CD14-positive monocyte (primary cell): ENCODE measurements at regions of chr9 and their contacts with region 1.

Region 1: GRCh38 chr9:133992780-133993634 is 883 bp upstream of the VAV2 start:
- DNase-seq: peak; percentile 51 to 54 (median 51)
- H3K4me3 ChIP-seq: peak overlapping the region; percentile 62 to 91 (median 64)
- H3K4me3 Mint-ChIP-seq: peak overlapping the region; percentile 74 to 84
- H3K27ac ChIP-seq: peak overlapping the region; percentile 7 to 79
- H3K27ac Mint-ChIP-seq: peak overlapping the region in 3 of 7 donors; percentile 22 to 64 (median 30)
- H3K4me1 ChIP-seq: peaks cover 26 to 39% of the 10 kb centered on the region in 2 donors
- H3K4me1 Mint-ChIP-seq: peaks cover 33% of the 10 kb centered on the region
- H3K27me3 ChIP-seq: peaks cover 0 to 15% of the 10 kb centered on the region in 2 donors
- H3K27me3 Mint-ChIP-seq: peaks cover 22 to 29% (median 23%) of the 10 kb centered on the region in 3 donors
- CTCF ChIP-seq: peak; percentile 57

Region 2: DNA sequence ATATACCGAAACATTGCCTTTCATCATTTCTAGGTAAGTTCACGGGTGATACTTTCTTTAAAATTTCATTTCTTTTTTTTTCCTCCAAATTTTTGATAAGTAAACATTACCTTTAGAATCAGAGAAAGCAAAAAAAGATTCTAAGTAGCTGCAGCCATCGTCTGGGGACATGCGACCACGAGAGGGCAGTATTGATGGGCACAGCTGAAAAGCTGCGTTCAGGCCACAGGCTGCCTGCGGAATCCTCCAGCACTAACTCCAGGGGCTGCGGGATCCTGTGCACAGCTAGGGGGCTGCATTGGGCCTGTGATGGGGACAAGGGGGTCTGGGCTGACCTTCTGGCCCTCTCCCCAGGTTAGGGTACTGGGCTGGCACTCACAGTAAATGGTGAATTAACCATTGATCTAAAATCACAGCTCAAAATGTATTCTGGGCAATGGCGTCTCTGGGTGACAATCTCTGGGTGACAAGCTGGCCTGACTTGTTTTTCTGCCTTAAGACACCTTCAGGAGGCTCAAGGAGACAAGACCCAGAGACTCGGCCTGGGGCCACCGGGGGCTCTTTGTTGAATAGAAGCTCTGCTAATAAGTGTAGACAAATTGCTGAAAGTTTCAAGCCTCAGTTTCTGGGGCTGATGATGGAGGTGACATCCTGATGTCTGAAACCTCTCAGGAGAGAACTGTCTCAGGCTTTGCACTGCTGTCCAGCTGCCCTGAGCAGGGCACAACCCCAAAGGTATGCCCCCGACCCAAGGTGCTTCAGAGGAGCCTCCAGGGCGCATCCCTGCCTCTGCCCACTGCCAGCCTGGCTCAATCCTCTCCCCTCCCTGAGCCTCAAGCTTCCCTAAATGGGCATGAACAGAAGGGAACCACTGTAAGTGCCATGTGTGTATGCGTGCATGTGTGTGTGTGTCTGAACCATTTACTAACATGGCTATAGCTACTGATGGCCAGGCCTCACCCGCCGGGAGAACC is 210.6 kb before region 1 on chr9:
- intact Hi-C with region 1: loop called (anchors 1 to 2 kb)
- DNase-seq: peak; percentile 61 to 63 (median 63)
- H3K4me3 ChIP-seq: no peak overlapping the region
- H3K4me3 Mint-ChIP-seq: no peak overlapping the region
- H3K27ac ChIP-seq: no peak overlapping the region
- H3K27ac Mint-ChIP-seq: peak overlapping the region in 2 of 7 donors; percentile 15 to 24
- H3K4me1 ChIP-seq: peaks cover 29 to 39% of the 10 kb centered on the region in 2 donors
- H3K4me1 Mint-ChIP-seq: peaks cover 40% of the 10 kb centered on the region
- H3K27me3 ChIP-seq: no peaks in the 10 kb centered on the region
- H3K27me3 Mint-ChIP-seq: peaks cover 0 to 2% (median 2%) of the 10 kb centered on the region in 3 donors
- CTCF ChIP-seq: peak; percentile 79

Region 3: DNA sequence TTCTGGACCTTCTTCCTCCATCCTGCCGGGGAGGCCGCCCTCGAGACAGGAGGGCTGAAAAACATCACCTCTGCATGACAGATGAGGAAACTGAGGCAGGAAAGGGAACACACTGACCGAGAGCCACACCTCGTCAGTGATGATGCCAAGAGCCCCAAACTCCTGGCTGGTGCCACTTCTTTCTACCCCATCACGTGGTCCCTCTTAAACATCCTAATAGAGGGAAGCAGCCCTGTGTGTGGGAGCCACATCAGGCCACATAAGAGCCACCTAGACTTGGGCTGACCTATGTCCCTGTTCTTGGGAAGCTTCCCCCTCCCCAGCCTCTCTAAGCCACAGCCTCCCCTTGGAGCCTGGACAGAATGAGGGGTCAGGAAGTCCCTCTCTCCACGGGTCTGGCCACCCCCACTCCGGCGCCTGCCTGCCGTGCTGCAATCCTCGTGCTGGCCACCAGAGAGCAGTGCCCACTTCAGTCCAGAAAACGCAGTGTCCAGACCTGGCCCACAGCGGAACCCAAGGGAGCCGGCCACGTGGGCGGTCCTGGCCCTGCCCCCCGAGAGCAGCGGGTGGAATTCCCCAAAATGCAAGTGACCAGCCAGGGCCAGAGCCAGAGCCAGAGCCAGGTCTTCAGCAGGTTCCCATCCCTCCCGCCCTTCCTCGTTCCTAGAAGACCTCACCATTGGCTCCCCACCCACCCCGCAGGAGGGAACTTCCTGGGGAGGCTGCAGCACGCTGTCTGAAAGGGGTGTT is 200.1 kb before region 1 on chr9:
- intact Hi-C with region 1: loop called (anchors 1 kb)
- DNase-seq: peak; percentile 83 to 95 (median 87)
- H3K4me3 ChIP-seq: peak overlapping the region in 2 of 3 experiments; percentile 14 to 52
- H3K4me3 Mint-ChIP-seq: peak overlapping the region; percentile 58 to 75
- H3K27ac ChIP-seq: peak overlapping the region; percentile 1 to 53
- H3K27ac Mint-ChIP-seq: peak overlapping the region; percentile 30 to 90 (median 65)
- H3K4me1 ChIP-seq: peaks cover 31 to 42% of the 10 kb centered on the region in 2 donors
- H3K4me1 Mint-ChIP-seq: peaks cover 44% of the 10 kb centered on the region
- H3K27me3 ChIP-seq: no peaks in the 10 kb centered on the region
- H3K27me3 Mint-ChIP-seq: peaks cover 1 to 13% (median 5%) of the 10 kb centered on the region in 3 donors
- CTCF ChIP-seq: peak; percentile 95

Region 4: DNA sequence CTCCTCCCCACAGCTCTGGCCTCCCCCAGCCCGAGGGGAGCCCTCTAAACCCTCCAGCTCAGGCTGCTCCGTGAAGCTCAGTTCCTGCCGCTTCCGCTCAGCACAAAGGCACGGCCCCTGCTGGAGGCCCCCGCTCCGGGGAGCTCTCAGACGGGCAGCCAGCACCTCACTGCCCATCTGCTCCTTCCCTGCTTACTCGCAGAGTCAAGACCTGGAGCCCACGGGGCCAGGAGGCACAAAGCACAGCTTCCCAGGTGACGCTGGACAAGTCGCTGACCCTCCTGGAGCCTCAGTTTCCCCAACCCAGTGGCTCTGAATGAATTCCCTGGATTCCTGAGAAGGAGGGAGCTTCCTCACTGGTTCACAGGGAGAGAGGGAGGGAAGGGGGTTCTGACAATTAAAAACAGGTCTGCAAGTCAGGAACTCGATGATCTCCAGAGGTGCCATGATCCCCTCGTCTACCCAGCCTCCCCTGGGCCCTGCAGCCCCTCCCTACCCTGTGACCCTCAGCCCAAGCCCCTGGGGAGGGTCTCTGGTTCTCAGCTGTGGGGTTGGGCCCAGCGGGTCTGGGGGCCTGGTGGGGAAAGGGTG is 37.1 kb before region 1 on chr9:
- intact Hi-C with region 1: loop called in 1 of 2 experiments (anchors 5 kb)
- DNase-seq: peak; percentile 7 to 28 (median 12)
- H3K4me3 ChIP-seq: peak overlapping the region in 2 of 3 experiments; percentile 7 to 60
- H3K4me3 Mint-ChIP-seq: peak overlapping the region; percentile 69 to 89
- H3K27ac ChIP-seq: no peak overlapping the region
- H3K27ac Mint-ChIP-seq: peak overlapping the region in 1 of 7 donors; percentile 36
- H3K4me1 ChIP-seq: peaks cover 40 to 45% of the 10 kb centered on the region in 2 donors
- H3K4me1 Mint-ChIP-seq: peaks cover 50% of the 10 kb centered on the region
- H3K27me3 ChIP-seq: peaks cover 0 to 2% of the 10 kb centered on the region in 2 donors
- H3K27me3 Mint-ChIP-seq: peaks cover 6 to 11% (median 11%) of the 10 kb centered on the region in 3 donors
- CTCF ChIP-seq: no peak

Region 5: DNA sequence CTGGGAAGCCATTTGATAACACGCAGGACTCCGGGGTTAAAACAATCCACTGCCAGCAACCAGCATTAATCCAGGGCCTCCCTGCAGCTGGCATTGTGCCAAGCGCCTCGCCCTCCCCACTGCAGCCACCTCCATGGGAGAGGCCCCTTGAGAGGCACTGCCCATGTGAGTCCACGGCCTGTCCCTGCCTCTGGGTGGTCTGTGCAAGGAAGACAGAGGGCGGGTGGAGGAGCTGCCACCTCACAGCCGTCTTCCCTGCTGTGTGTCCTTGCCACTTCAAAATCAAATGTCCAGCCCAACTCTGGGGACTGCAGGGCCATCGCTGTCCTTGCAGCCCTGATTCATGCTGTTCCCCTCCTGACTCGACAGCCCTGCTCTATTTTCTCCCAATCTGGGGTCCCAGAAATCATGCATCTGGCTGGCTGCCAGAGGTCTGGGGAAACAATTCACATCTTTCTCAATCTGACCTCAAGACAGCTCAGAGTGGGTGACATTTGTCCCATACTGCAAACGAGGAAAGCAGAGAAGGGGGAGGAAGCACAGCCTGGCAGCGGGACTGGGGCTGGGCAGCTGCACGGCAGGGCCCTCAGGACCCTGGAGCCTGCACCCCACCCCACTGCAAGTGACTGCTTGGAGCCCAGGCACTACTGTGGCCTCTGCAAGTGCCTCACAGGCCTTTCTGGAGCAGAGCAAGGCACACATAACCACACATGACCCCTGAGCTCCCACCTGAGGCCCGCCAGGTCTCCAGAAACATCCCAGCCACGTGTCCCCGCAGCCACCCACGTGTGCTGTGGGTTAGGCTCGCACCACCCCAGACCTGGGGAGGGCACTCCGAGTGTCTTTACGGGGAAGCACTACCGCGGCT is 48.0 kb after region 1 on chr9:
- intact Hi-C with region 1: no loop called
- DNase-seq: no peak
- H3K4me3 ChIP-seq: no peak overlapping the region
- H3K4me3 Mint-ChIP-seq: no peak overlapping the region
- H3K27ac ChIP-seq: no peak overlapping the region
- H3K27ac Mint-ChIP-seq: peak overlapping the region in 4 of 7 donors; percentile 25 to 69 (median 52)
- H3K4me1 ChIP-seq: peaks cover 0 to 8% of the 10 kb centered on the region in 2 donors
- H3K4me1 Mint-ChIP-seq: peaks cover 18% of the 10 kb centered on the region
- H3K27me3 ChIP-seq: no peaks in the 10 kb centered on the region
- H3K27me3 Mint-ChIP-seq: peaks cover 0 to 2% (median 2%) of the 10 kb centered on the region in 3 donors
- CTCF ChIP-seq: no peak